Activated CD4-positive, alpha-beta T cell treated with anti-CD3 and anti-CD28 coated beads for 36 hours (primary cell): ENCODE measurements at regions of chr16 and their contacts with region 1.

Region 1: DNA sequence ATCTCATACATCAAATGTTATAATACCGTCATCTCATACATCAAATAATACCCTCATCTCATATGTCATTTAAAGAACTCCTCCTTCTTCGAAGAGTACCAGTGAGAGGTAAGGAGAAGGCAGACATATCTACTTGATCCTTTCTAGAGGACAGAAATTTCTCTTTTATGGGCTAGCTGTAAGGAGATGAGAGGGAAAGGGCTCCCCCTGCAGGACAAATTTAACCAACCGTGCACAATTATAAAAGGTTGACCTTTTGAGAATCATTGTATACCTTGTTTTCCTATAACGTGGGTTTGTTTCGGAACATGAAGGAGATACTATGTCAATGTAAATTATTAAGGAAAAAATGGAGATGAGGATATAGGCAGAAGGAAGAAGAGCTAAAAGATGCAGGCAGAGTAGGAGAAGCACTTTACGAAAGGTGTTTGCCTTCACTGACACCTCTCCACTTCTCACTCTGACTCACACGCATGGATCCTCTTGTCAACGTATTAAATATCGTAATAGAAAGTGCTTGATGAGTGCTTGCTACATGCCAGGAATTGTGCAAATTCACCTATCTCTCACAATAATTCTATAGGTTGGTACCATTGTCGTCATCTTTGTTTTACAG is 465.9 kb upstream of the ERCC4 start:
- DNase-seq: peak; percentile 56
- ATAC-seq: no peak
- H3K4me3 Mint-ChIP-seq: no peak overlapping the region
- H3K27ac Mint-ChIP-seq: no peak overlapping the region
- H3K4me1 Mint-ChIP-seq: no peaks in the 10 kb centered on the region
- H3K27me3 Mint-ChIP-seq: peaks cover 15% of the 10 kb centered on the region

Region 2: GRCh38 chr16:12896562-12896961 is 557.5 kb before region 1 on chr16:
- CTCF ChIA-PET with region 1: no interaction called
- POLR2A ChIA-PET with region 1: no interaction called
- intact Hi-C with region 1: loop called in 1 of 2 experiments (anchors 2 kb)
- DNase-seq: peak; percentile 9
- ATAC-seq: no peak
- H3K4me3 Mint-ChIP-seq: no peak overlapping the region
- H3K27ac Mint-ChIP-seq: no peak overlapping the region
- H3K4me1 Mint-ChIP-seq: no peaks in the 10 kb centered on the region
- H3K27me3 Mint-ChIP-seq: peaks cover 40% of the 10 kb centered on the region